ENCODE measurements at regions of chr3 and their contacts with region 1.

Region 1: GRCh38 chr3:31132132-31132769 is 237.8 kb upstream of the GADL1 start:
- DNase-seq: peak; percentile 42
- H3K4me3 ChIP-seq: no peak overlapping the region
- H3K27ac ChIP-seq: no peak overlapping the region
- H3K4me1 ChIP-seq: no peaks in the 10 kb centered on the region
- H3K27me3 ChIP-seq: no peaks in the 10 kb centered on the region
- CTCF ChIP-seq: peak; percentile 71 to 73

Region 2: GRCh38 chr3:30768703-30769685 is 363.3 kb before region 1 on chr3:
- CTCF ChIA-PET with region 1: interaction called, 7 read pairs
- dilution Hi-C with region 1: no loop called
- in situ Hi-C with region 1: loop called (anchors 5 to 10 kb)
- intact Hi-C with region 1: loop called (anchors 1 kb)
- DNase-seq: peak; percentile 32
- H3K4me3 ChIP-seq: no peak overlapping the region
- H3K27ac ChIP-seq: no peak overlapping the region
- H3K4me1 ChIP-seq: peaks cover 15% of the 10 kb centered on the region
- H3K27me3 ChIP-seq: no peaks in the 10 kb centered on the region
- CTCF ChIP-seq: peak; percentile 83 to 95

Region 3: GRCh38 chr3:30924763-30925162 is 207.5 kb before region 1 on chr3:
- CTCF ChIA-PET with region 1: no interaction called
- dilution Hi-C with region 1: no loop called
- in situ Hi-C with region 1: loop called in 1 of 2 experiments (anchors 10 kb)
- intact Hi-C with region 1: loop called (anchors 1 kb)
- DNase-seq: no peak
- H3K4me3 ChIP-seq: no peak overlapping the region
- H3K27ac ChIP-seq: no peak overlapping the region
- H3K4me1 ChIP-seq: no peaks in the 10 kb centered on the region
- H3K27me3 ChIP-seq: peaks cover 7% of the 10 kb centered on the region
- CTCF ChIP-seq: no peak

Region 4: DNA sequence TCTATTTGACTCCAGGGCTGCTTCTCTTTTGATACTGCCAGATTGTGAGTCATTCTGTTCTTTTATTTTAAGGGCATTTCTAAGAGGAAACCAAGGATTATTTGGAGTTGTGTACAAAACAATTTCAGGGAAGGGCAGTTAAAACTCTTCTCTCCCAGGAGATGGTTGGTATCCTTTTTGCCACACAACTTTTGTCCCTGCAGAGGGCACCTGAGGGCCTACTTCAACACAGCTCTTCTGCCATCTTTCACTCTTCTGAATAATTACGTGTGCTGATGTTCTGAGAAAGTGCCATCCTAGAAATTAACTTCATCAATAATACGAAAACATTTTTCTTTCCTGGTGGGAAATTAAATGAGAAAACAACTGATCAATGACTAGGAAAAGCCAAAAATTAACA is 162.1 kb before region 1 on chr3:
- CTCF ChIA-PET with region 1: no interaction called
- dilution Hi-C with region 1: no loop called
- in situ Hi-C with region 1: no loop called
- intact Hi-C with region 1: loop called (anchors 1 kb)
- DNase-seq: peak; percentile 20
- H3K4me3 ChIP-seq: no peak overlapping the region
- H3K27ac ChIP-seq: no peak overlapping the region
- H3K4me1 ChIP-seq: peaks cover under 1% of the 10 kb centered on the region
- H3K27me3 ChIP-seq: no peaks in the 10 kb centered on the region
- CTCF ChIP-seq: peak; percentile 14 to 64

Region 5: GRCh38 chr3:31275038-31275562 is 142.8 kb after region 1 on chr3:
- CTCF ChIA-PET with region 1: no interaction called
- dilution Hi-C with region 1: no loop called
- in situ Hi-C with region 1: no loop called
- intact Hi-C with region 1: no loop called
- DNase-seq: peak; percentile 39
- H3K4me3 ChIP-seq: no peak overlapping the region
- H3K27ac ChIP-seq: peak overlapping the region; percentile 60
- H3K4me1 ChIP-seq: peaks cover 22% of the 10 kb centered on the region
- H3K27me3 ChIP-seq: no peaks in the 10 kb centered on the region
- CTCF ChIP-seq: no peak

Region 6: GRCh38 chr3:31448035-31448881 is 316.0 kb after region 1 on chr3:
- CTCF ChIA-PET with region 1: no interaction called
- dilution Hi-C with region 1: no loop called
- in situ Hi-C with region 1: no loop called
- intact Hi-C with region 1: loop called (anchors 1 kb)
- DNase-seq: peak; percentile 27
- H3K4me3 ChIP-seq: no peak overlapping the region
- H3K27ac ChIP-seq: no peak overlapping the region
- H3K4me1 ChIP-seq: no peaks in the 10 kb centered on the region
- H3K27me3 ChIP-seq: peaks cover 3% of the 10 kb centered on the region
- CTCF ChIP-seq: peak; percentile 92 to 95

Measured in mammary epithelial cell (primary cell).